Activated CD4-positive, alpha-beta T cell treated with anti-CD3 and anti-CD28 coated beads, Interleukin-2, amount 10 ng/mL, durations not matched to agents 24 days and 14 days (primary cell): ENCODE measurements at regions of chr3 and their contacts with region 1.

Region 1: DNA sequence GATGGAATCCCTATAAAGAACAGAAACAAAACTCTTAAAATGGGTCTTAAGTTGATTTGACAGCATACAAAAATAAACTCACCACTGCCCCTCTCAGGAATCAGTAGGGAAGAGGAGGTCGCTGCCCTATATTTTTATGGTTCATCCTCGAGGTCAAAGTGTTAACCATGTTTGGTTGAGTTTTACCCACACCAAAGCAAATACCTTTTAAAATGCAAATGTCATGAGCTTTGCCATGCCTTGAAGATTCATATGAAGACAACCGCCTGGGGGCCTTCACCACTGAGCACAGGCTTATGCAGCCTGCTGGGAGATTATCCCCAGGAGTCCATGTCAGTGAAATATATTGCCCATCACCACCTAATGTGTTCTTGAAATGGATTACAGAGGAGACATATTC is 66.1 kb downstream of the GLB1 start:
- DNase-seq: peak; percentile 82
- H3K4me3 Mint-ChIP-seq: no peak overlapping the region
- H3K27ac Mint-ChIP-seq: peak overlapping the region; percentile 45
- H3K4me1 Mint-ChIP-seq: peaks cover 25% of the 10 kb centered on the region
- H3K27me3 Mint-ChIP-seq: no peaks in the 10 kb centered on the region

Region 2: GRCh38 chr3:32960404-32961170 is 70.2 kb before region 1 on chr3:
- intact Hi-C with region 1: loop called (anchors 1 kb)
- DNase-seq: no peak
- H3K4me3 Mint-ChIP-seq: peak overlapping the region; percentile 68
- H3K27ac Mint-ChIP-seq: peak overlapping the region; percentile 96
- H3K4me1 Mint-ChIP-seq: peaks cover 46% of the 10 kb centered on the region
- H3K27me3 Mint-ChIP-seq: no peaks in the 10 kb centered on the region

Region 3: GRCh38 chr3:33047842-33048834 is 17.3 kb after region 1 on chr3:
- intact Hi-C with region 1: loop called (anchors 1 kb)
- DNase-seq: peak; percentile 91
- H3K4me3 Mint-ChIP-seq: peak overlapping the region; percentile 78
- H3K27ac Mint-ChIP-seq: peak overlapping the region; percentile 97
- H3K4me1 Mint-ChIP-seq: peaks cover 68% of the 10 kb centered on the region
- H3K27me3 Mint-ChIP-seq: no peaks in the 10 kb centered on the region

Region 4: GRCh38 chr3:33074217-33075067 is 43.6 kb after region 1 on chr3:
- intact Hi-C with region 1: loop called (anchors 2 kb)
- DNase-seq: peak; percentile 89
- H3K4me3 Mint-ChIP-seq: no peak overlapping the region
- H3K27ac Mint-ChIP-seq: peak overlapping the region; percentile 64
- H3K4me1 Mint-ChIP-seq: peaks cover 25% of the 10 kb centered on the region
- H3K27me3 Mint-ChIP-seq: no peaks in the 10 kb centered on the region

Region 5: DNA sequence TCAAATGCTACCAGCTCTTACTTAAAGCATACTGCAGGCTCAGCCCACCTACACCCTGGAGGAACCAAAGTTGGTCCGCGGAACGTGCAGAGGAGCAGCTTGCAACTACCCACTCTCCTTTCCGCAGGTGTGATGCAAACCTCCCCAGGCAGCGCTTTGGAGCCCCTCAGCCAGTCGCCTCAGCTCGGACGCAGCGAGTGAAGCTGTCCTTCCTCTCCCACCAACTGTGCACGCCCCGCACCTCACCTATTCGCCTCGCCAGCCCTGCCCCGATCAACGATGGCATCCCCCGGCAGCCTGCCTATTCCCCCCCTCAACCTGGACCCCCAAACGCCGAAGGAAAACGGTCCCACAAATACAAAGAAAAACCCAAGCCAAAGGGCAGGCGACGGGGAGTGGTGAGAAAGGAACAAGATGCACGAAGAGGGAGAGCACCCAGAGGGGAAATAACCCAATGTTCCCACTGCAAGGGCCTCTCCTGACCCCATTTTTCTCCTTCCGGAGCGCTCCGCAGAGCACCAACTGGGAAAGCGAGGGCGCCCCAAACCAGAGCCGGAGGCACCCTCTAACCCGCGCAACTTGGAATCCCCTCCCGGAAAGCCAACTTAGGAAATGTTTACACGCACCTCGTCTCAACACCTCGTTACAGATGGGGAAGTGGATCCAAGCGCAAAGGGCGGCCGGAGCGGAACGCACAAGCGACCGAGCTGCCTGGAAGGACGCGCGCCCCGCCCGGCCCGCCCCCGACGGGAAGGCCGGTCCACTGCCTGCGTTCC is 65.5 kb after region 1 on chr3:
- intact Hi-C with region 1: loop called (anchors 2 kb)
- DNase-seq: peak; percentile 86
- H3K4me3 Mint-ChIP-seq: peak overlapping the region; percentile 99
- H3K27ac Mint-ChIP-seq: peak overlapping the region; percentile 90
- H3K4me1 Mint-ChIP-seq: peaks cover 38% of the 10 kb centered on the region
- H3K27me3 Mint-ChIP-seq: peaks cover 2% of the 10 kb centered on the region